Cardiac septum (tissue), 1 donor: ENCODE measurements at regions of chr6 and their contacts with region 1.

Region 1: GRCh38 chr6:81752138-81752920 is at the start of gene TENT5A:
- DNase-seq: peak; percentile 97
- total RNA-seq, gene TENT5A: 35.2 TPM

Region 2: GRCh38 chr6:81241126-81242041 is 510.9 kb before region 1 on chr6:
- intact Hi-C with region 1: loop called (anchors 5 kb)
- DNase-seq: no peak

Region 3: DNA sequence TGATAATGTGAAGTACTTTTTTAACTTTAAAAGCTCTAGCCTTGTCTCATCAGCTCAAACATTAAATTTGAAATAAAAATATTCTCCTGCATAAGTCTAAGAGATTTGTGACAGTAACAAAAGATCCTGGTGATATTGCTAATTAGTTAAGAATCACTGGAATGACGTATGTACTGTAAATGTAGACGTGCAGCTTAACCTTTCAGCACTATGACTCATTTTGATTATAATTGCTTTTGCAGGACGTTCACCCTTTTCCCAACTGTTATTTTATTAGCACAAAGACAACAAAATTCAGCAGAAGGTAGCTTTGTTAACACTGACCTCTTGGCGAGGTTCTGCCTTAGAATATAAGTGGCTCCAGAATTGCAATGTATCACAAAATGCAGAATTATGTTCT is 68.4 kb before region 1 on chr6:
- intact Hi-C with region 1: loop called (anchors 2 kb)
- DNase-seq: no peak

Region 4: GRCh38 chr6:81894788-81895271 is 142.5 kb after region 1 on chr6:
- intact Hi-C with region 1: loop called (anchors 5 kb)
- DNase-seq: no peak

Region 5: DNA sequence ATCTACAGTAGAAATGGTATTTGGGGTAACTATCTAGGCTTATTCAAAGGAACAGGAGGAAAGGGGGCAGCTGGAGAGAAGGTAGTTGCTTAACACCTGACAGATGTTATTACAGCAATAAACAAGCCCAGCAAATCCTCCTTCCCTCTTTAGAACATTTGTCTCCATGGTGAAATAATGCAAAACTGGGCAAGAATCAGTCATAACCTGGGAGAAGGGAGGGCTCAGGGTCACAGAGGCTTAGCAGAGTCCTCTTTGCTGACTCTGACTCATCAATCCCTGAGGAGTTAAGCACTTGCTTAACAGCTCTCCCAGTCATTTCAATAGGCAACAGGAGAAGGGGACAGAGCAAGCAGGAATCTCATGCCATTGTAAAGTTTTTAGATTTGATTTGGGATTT is 265.0 kb after region 1 on chr6:
- intact Hi-C with region 1: loop called (anchors 10 kb)
- DNase-seq: no peak

Region 6: DNA sequence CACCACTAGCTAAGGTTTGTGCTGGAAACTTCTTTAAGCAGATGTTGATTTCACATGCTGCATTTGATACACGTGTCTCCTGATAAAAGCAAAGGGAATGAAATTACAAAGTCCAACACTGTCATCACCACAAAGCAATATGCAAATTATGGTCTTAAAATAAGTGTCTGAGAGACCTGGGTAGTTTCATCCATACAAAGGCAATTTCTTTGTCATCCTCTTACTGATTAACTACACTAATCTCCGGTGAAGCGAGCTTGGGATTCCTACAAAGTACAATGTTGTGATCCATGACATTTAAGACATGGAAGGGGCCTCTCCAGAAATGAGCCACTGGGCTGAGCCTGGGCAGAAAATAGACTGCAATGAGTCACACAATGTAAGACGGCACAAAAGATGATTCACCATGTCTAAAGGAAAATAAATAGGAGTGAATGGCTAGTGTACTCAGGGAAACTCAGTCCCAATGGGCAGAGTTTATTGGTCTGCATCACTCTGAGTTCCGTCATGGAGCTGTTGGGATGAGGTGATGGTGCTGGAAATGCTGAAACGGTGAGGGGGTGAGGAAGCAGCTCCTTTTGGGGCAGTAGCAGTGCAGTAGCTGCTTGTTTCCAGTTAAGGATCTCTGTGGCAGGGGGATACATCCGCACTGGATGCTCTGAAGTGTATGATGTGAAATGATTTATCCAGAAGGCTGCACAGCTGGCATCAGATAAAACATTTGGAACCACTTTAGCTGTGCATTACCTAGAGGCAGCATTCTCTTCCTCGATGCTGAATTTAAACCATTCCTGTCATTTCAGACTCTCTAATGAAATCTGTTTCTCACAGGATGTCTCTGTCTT is 391.9 kb after region 1 on chr6:
- intact Hi-C with region 1: loop called (anchors 10 kb)
- DNase-seq: no peak